ENCODE measurements at regions of chr7 and their contacts with region 1.

Region 1: DNA sequence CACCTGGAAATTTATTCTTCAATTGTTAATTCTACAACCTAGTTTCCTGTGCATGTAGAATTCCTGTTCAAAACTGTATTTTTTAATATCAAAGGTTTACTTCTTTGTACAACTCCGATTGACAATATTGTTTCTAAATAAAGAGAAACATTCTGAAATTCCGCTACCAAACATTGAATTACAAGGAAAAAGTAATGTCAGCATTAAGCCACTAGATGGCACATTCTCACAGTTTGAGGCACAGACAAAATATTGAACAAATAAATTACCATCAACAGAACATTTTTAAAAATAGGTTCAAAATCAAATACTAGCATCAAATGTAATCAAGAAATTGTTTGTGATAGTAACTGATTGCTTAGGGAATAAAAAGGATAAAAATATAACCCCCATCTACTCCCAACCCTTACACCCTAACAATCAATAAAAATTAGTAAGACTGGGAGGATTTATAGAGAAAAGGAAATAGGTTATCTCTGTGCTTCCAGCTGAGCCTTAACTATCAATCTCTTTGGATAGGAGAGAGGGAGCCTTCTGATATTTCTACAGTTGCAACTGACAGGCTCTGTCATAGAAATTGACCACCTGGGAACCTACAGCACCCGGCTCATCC is 86.6 kb upstream of the C7orf33 start:
- DNase-seq: no peak
- H3K4me3 Mint-ChIP-seq: no peak overlapping the region
- H3K27ac Mint-ChIP-seq: no peak overlapping the region
- H3K4me1 Mint-ChIP-seq: peaks cover 29% of the 10 kb centered on the region
- H3K27me3 Mint-ChIP-seq: peaks cover 28% of the 10 kb centered on the region

Region 2: GRCh38 chr7:148447221-148447849 is 56.6 kb before region 1 on chr7:
- CTCF ChIA-PET with region 1: no interaction called
- POLR2A ChIA-PET with region 1: no interaction called
- intact Hi-C with region 1: loop called (anchors 1 kb)
- DNase-seq: no peak
- H3K4me3 Mint-ChIP-seq: no peak overlapping the region
- H3K27ac Mint-ChIP-seq: no peak overlapping the region
- H3K4me1 Mint-ChIP-seq: peaks cover 15% of the 10 kb centered on the region
- H3K27me3 Mint-ChIP-seq: peaks cover 2% of the 10 kb centered on the region

Region 3: DNA sequence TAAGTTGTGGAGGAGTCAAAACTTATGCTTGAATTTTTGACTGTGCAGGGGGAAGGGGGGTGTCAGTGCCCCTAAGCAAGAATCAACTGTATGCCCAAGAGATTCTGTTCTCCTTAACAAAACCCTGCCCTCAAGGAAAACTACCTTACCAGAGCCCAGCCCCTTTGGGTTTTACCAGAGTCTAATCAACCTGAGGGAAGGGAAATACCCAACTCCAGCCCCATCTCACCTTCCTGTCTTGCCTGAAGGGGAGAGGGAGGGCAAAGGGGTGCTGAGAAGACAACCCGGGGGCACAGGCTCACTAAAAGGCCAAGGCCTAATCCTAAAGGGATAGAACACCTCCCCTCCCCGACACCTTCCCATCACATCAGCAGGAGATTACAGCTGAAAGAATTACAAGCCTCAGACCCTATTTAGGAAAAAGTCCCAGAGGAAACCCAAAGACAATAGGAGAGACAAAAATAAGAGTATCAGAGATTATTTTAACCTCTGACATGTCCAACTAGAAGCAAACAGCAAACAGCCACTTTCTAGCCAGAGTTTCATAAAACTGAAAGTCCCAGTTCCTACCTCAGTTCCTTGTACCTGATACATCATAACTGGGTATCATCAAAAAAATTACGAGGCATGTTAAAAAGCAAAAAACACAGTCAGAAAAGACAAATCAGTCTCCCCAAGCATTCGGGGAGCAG is 59.7 kb after region 1 on chr7:
- CTCF ChIA-PET with region 1: interaction called, 4 read pairs
- POLR2A ChIA-PET with region 1: no interaction called
- intact Hi-C with region 1: loop called (anchors 1 kb)
- DNase-seq: no peak
- H3K4me3 Mint-ChIP-seq: peak overlapping the region; percentile 31
- H3K27ac Mint-ChIP-seq: peak overlapping the region; percentile 89
- H3K4me1 Mint-ChIP-seq: peaks cover 17% of the 10 kb centered on the region
- H3K27me3 Mint-ChIP-seq: peaks cover 7% of the 10 kb centered on the region

Region 4: DNA sequence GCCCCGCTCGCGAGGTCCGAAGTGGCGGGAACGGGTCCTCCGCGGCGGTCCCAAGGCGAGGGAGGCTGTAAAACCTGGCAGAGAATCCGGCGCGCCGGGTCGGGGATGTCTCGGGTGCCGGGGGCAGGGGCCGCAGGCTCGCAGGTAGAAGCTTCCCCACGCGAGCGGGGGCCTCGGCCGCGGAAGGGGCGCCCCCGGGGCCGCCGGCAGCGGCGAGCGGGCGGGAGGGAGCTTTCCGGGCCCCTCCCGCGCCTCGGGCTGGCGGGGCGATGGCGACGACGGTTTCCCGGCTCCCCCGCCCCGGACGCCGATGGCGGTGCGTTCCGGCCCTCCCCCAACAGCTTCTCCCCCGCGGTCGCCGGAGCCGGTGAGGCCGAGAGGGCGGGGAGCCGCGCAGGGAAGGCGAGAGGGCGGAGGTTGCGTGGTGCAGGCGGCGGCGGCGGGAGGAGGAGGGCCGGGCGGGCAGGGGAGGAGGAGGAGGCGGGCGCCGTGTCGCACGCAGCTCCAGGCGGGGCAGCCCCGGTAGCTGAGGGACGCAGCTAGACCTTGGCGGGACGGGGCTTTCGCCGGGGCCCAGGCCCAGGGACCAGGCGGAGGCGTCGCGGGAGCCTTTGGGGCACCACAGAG is 194.5 kb after region 1 on chr7 and contains the start of gene CUL1:
- CTCF ChIA-PET with region 1: no interaction called
- POLR2A ChIA-PET with region 1: no interaction called
- intact Hi-C with region 1: loop called (anchors 1 kb)
- DNase-seq: peak; percentile 88
- H3K4me3 Mint-ChIP-seq: peak within 1 kb of the TSS; percentile 89
- H3K27ac Mint-ChIP-seq: peak within 1 kb of the TSS; percentile 98
- H3K4me1 Mint-ChIP-seq: peaks cover 57% of the 10 kb centered on the region
- H3K27me3 Mint-ChIP-seq: no peaks in the 10 kb centered on the region
- total RNA-seq, gene CUL1: 64.7 to 69.6 TPM

Region 5: GRCh38 chr7:148914208-148914777 is 410.3 kb after region 1 on chr7:
- CTCF ChIA-PET with region 1: no interaction called
- POLR2A ChIA-PET with region 1: no interaction called
- intact Hi-C with region 1: loop called (anchors 1 kb)
- DNase-seq: peak; percentile 87
- H3K4me3 Mint-ChIP-seq: peak overlapping the region; percentile 62
- H3K27ac Mint-ChIP-seq: peak overlapping the region; percentile 93
- H3K4me1 Mint-ChIP-seq: peaks cover 66% of the 10 kb centered on the region
- H3K27me3 Mint-ChIP-seq: no peaks in the 10 kb centered on the region

Region 6: DNA sequence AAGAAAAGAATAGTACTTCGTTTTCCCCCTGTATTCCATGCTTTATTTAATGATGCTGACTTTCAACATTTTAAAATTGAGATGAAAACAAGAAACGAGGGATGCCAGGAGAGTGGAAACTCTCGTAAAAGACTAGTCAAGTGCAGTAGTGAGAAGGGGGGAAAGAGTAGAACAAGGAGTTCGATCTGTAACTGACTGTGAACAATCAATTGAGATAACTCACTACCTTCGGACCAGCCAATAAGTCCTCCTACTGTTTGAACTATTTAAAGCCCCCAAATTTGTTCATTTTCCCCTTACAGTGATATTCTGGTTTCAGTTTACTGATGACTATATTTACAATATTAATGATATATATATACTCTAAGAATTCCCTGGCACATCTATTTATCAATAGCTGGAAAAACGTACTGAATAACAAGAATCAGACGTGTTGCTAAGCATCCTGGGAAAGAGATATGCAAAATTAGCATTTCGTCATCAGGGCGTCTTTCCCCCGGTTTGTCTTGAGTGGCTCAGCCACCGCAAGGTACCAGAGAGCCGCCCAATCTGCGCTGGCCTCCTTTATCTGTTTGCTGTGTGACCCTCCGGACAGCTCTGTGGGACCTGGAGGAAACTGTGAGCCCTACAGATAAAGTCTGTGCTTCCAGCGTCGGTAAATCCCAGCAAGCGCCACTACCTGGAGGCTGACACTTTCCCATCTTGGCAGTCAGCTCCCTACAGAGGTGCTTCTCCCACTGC is 483.2 kb after region 1 on chr7:
- CTCF ChIA-PET with region 1: no interaction called
- POLR2A ChIA-PET with region 1: no interaction called
- intact Hi-C with region 1: loop called (anchors 1 kb)
- DNase-seq: peak; percentile 87
- H3K4me3 Mint-ChIP-seq: peak overlapping the region; percentile 95
- H3K27ac Mint-ChIP-seq: peak overlapping the region; percentile 92
- H3K4me1 Mint-ChIP-seq: peaks cover 40% of the 10 kb centered on the region
- H3K27me3 Mint-ChIP-seq: peaks cover 2% of the 10 kb centered on the region

Region 7: GRCh38 chr7:149195180-149196150 is 691.5 kb after region 1 on chr7 and contains the start of gene ZNF282:
- CTCF ChIA-PET with region 1: no interaction called
- POLR2A ChIA-PET with region 1: no interaction called
- intact Hi-C with region 1: no loop called
- DNase-seq: peak; percentile 89
- H3K4me3 Mint-ChIP-seq: peak within 1 kb of the TSS; percentile 92
- H3K27ac Mint-ChIP-seq: peak within 1 kb of the TSS; percentile 93
- H3K4me1 Mint-ChIP-seq: peaks cover 51% of the 10 kb centered on the region
- H3K27me3 Mint-ChIP-seq: no peaks in the 10 kb centered on the region
- total RNA-seq, gene ZNF282: 61.7 to 61.9 TPM